CD8-positive, alpha-beta memory T cell (primary cell): ENCODE measurements at regions of chr17 and their contacts with region 1.

Region 1: GRCh38 chr17:77957857-77958715 is at the start of gene TNRC6C:
- DNase-seq: peak; percentile 99 to 100 (median 100)
- H3K4me3 ChIP-seq: peak within 1 kb of the TSS; percentile 83
- H3K4me3 Mint-ChIP-seq: peak within 1 kb of the TSS; percentile 93 to 98 (median 97)
- H3K27ac ChIP-seq: peak within 1 kb of the TSS; percentile 58
- H3K27ac Mint-ChIP-seq: peak within 1 kb of the TSS; percentile 92 to 97 (median 96)
- H3K4me1 ChIP-seq: peaks cover 38% of the 10 kb centered on the region
- H3K4me1 Mint-ChIP-seq: peaks cover 39 to 48% (median 45%) of the 10 kb centered on the region in 3 donors
- H3K27me3 ChIP-seq: no peaks in the 10 kb centered on the region
- H3K27me3 Mint-ChIP-seq: peaks cover 0 to 6% of the 10 kb centered on the region in 2 donors
- total RNA-seq, gene TNRC6C: 25.9 to 28.1 TPM

Region 2: GRCh38 chr17:77645072-77646045 is 312.7 kb before region 1 on chr17:
- CTCF ChIA-PET with region 1: interaction called, 3 read pairs
- POLR2A ChIA-PET with region 1: interaction called, 15 read pairs
- DNase-seq: peak; percentile 37 to 77 (median 62)
- H3K4me3 ChIP-seq: peak overlapping the region; percentile 18
- H3K4me3 Mint-ChIP-seq: peak overlapping the region; percentile 75 to 93 (median 89)
- H3K27ac ChIP-seq: no peak overlapping the region
- H3K27ac Mint-ChIP-seq: peak overlapping the region; percentile 63 to 96 (median 92)
- H3K4me1 ChIP-seq: peaks cover 21% of the 10 kb centered on the region
- H3K4me1 Mint-ChIP-seq: peaks cover 17 to 34% (median 34%) of the 10 kb centered on the region in 3 donors
- H3K27me3 ChIP-seq: no peaks in the 10 kb centered on the region
- H3K27me3 Mint-ChIP-seq: peaks cover 2% of the 10 kb centered on the region in 2 donors

Region 3: GRCh38 chr17:77772461-77772897 is 185.6 kb before region 1 on chr17:
- CTCF ChIA-PET with region 1: interaction called, 4 read pairs
- POLR2A ChIA-PET with region 1: interaction called, 12 read pairs
- DNase-seq: peak; percentile 52 to 80 (median 59)
- H3K4me3 ChIP-seq: no peak overlapping the region
- H3K4me3 Mint-ChIP-seq: peak overlapping the region in 5 of 7 donors; percentile 24 to 76 (median 41)
- H3K27ac ChIP-seq: no peak overlapping the region
- H3K27ac Mint-ChIP-seq: peak overlapping the region in 6 of 8 donors; percentile 32 to 96 (median 81)
- H3K4me1 ChIP-seq: peaks cover 8% of the 10 kb centered on the region
- H3K4me1 Mint-ChIP-seq: peaks cover 13 to 18% (median 14%) of the 10 kb centered on the region in 3 donors
- H3K27me3 ChIP-seq: no peaks in the 10 kb centered on the region
- H3K27me3 Mint-ChIP-seq: peaks cover 0 to 5% of the 10 kb centered on the region in 2 donors

Region 4: GRCh38 chr17:77834170-77835115 is 123.6 kb before region 1 on chr17:
- CTCF ChIA-PET with region 1: interaction called, 3 read pairs
- POLR2A ChIA-PET with region 1: interaction called, 12 read pairs
- DNase-seq: peak in 4 of 5 donors; percentile 24 to 80 (median 49)
- H3K4me3 ChIP-seq: no peak overlapping the region
- H3K4me3 Mint-ChIP-seq: peak overlapping the region in 5 of 7 donors; percentile 18 to 66 (median 53)
- H3K27ac ChIP-seq: peak overlapping the region; percentile 33
- H3K27ac Mint-ChIP-seq: peak overlapping the region in 6 of 8 donors; percentile 12 to 83 (median 45)
- H3K4me1 ChIP-seq: peaks cover 25% of the 10 kb centered on the region
- H3K4me1 Mint-ChIP-seq: peaks cover 30 to 38% (median 30%) of the 10 kb centered on the region in 3 donors
- H3K27me3 ChIP-seq: no peaks in the 10 kb centered on the region
- H3K27me3 Mint-ChIP-seq: no peaks in the 10 kb centered on the region

Region 5: DNA sequence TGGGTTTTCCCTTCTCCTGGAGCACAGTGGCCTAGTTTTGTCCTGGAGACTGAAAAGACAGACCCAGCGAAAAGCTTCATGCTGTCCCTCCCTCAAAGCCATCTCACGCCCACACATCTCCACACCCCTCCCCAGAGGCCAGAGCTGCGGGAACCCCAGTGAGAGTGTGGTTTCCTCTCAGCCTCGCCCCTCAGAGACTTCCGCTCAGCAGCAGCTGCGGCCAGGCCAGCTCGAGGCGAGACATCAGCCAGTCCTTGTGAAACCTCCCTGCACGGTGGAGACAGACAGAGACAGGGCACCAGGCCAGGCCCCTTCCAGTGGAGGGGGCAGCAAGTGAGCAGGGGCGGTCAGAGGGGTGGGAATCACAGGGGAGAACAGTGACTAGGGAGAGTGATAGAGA is 76.5 kb before region 1 on chr17:
- CTCF ChIA-PET with region 1: interaction called, 15 read pairs
- POLR2A ChIA-PET with region 1: interaction called, 68 read pairs
- DNase-seq: peak; percentile 58 to 90 (median 79)
- H3K4me3 ChIP-seq: peak overlapping the region; percentile 70
- H3K4me3 Mint-ChIP-seq: peak overlapping the region; percentile 84 to 94 (median 90)
- H3K27ac ChIP-seq: peak overlapping the region; percentile 88
- H3K27ac Mint-ChIP-seq: peak overlapping the region; percentile 98 to 100 (median 99)
- H3K4me1 ChIP-seq: peaks cover 88% of the 10 kb centered on the region
- H3K4me1 Mint-ChIP-seq: peaks cover 66 to 93% (median 86%) of the 10 kb centered on the region in 3 donors
- H3K27me3 ChIP-seq: no peaks in the 10 kb centered on the region
- H3K27me3 Mint-ChIP-seq: peaks cover 0 to 2% of the 10 kb centered on the region in 2 donors

Region 6: DNA sequence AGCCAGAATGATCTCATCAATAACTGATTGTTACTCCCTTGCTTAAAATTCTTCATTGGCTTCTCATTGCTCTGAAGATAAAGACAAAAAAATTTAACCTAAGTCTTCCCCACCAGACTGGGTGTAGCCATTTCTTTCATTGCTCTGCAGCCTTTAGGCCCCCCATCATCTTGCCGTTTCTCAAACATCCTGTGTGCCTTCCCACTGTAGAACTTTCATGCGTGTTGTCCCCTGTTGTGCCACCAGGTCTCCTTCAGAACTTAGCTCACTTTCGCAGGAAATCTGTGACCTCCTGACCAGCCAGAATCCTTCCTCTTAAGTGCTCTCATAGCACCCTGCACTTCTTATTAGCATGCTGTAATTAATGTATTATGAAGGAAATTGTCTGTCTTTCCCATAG is 32.2 kb after region 1 on chr17:
- CTCF ChIA-PET with region 1: no interaction called
- POLR2A ChIA-PET with region 1: interaction called, 10 read pairs
- DNase-seq: peak in 1 of 5 donors; percentile 22
- H3K4me3 ChIP-seq: no peak overlapping the region
- H3K4me3 Mint-ChIP-seq: no peak overlapping the region
- H3K27ac ChIP-seq: no peak overlapping the region
- H3K27ac Mint-ChIP-seq: peak overlapping the region in 5 of 8 donors; percentile 9 to 71 (median 13)
- H3K4me1 ChIP-seq: peaks cover 37% of the 10 kb centered on the region
- H3K4me1 Mint-ChIP-seq: peaks cover 57 to 78% (median 70%) of the 10 kb centered on the region in 3 donors
- H3K27me3 ChIP-seq: no peaks in the 10 kb centered on the region
- H3K27me3 Mint-ChIP-seq: no peaks in the 10 kb centered on the region

Region 7: DNA sequence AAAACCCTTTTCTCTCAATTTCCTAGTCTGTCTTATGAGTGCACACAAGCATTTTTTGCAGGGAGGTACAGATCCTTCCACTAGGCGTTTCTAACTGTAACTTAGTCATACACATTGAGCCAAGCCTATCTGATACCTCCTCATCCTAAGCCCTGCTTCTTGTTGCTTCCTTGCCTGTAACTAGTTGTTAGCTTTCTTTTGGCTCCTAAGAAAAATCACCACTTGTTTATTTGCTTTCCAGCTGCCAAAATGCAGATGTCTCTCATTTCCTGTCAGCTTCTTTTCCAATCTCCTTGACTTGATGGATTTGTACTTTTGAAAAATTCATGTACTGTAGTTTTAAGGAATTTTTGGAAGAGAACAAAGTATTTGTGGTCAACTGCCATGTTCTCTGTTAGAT is 74.1 kb after region 1 on chr17:
- CTCF ChIA-PET with region 1: no interaction called
- POLR2A ChIA-PET with region 1: no interaction called
- DNase-seq: no peak
- H3K4me3 ChIP-seq: no peak overlapping the region
- H3K4me3 Mint-ChIP-seq: no peak overlapping the region
- H3K27ac ChIP-seq: no peak overlapping the region
- H3K27ac Mint-ChIP-seq: peak overlapping the region in 4 of 8 donors; percentile 36 to 49 (median 43)
- H3K4me1 ChIP-seq: no peaks in the 10 kb centered on the region
- H3K4me1 Mint-ChIP-seq: peaks cover 15 to 46% (median 26%) of the 10 kb centered on the region in 3 donors
- H3K27me3 ChIP-seq: no peaks in the 10 kb centered on the region
- H3K27me3 Mint-ChIP-seq: no peaks in the 10 kb centered on the region

Region 8: GRCh38 chr17:78075545-78075944 is 117.5 kb after region 1 on chr17:
- CTCF ChIA-PET with region 1: no interaction called
- POLR2A ChIA-PET with region 1: no interaction called
- DNase-seq: no peak
- H3K4me3 ChIP-seq: no peak overlapping the region
- H3K4me3 Mint-ChIP-seq: no peak overlapping the region
- H3K27ac ChIP-seq: no peak overlapping the region
- H3K27ac Mint-ChIP-seq: peak overlapping the region in 2 of 8 donors; percentile 12 to 17
- H3K4me1 ChIP-seq: no peaks in the 10 kb centered on the region
- H3K4me1 Mint-ChIP-seq: no peaks in the 10 kb centered on the region
- H3K27me3 ChIP-seq: no peaks in the 10 kb centered on the region
- H3K27me3 Mint-ChIP-seq: no peaks in the 10 kb centered on the region

Region 9: GRCh38 chr17:78140169-78140976 is 182.3 kb after region 1 on chr17:
- CTCF ChIA-PET with region 1: no interaction called
- POLR2A ChIA-PET with region 1: interaction called, 13 read pairs
- DNase-seq: peak; percentile 92 to 95 (median 94)
- H3K4me3 ChIP-seq: peak overlapping the region; percentile 12
- H3K4me3 Mint-ChIP-seq: peak overlapping the region; percentile 32 to 82 (median 64)
- H3K27ac ChIP-seq: peak overlapping the region; percentile 54
- H3K27ac Mint-ChIP-seq: peak overlapping the region; percentile 87 to 95 (median 92)
- H3K4me1 ChIP-seq: peaks cover 76% of the 10 kb centered on the region
- H3K4me1 Mint-ChIP-seq: peaks cover 47 to 85% (median 59%) of the 10 kb centered on the region in 3 donors
- H3K27me3 ChIP-seq: no peaks in the 10 kb centered on the region
- H3K27me3 Mint-ChIP-seq: no peaks in the 10 kb centered on the region